MCF 10A (cell line): ENCODE measurements at regions of chr15 and their contacts with region 1.

Region 1: DNA sequence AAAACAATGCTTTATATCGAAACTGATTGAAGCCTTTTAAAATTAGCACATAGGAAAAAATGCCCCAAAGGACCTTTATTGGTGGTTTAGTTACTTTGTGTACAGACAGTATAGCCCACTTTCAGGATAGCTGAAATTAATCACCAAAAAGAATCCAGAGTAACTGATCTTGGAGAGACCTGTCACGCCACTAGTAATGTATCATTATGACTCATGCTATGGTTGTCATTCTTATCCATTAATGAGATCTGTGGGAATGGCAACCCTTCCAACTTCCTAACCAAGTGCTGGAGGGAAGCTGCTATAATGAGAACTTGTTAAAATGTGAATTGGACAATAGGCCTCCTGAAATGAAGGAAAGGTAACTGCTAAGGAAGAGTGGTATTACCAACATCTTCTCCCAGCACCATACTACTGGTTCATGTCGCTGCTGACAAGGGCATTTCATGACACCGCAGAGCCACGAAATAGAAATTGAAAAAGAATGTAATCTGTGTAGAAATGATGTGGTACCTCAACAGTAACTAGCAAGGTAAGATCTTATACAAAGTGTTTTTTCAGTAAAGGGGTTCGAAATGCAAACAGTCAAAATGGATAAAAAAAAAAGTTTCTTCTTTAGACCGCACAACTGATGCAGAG is 7.1 kb upstream of the EMC4 start:
- DNase-seq: peak; percentile 44
- H3K4me3 Mint-ChIP-seq: no peak overlapping the region
- H3K27ac Mint-ChIP-seq: no peak overlapping the region
- H3K4me1 Mint-ChIP-seq: peaks cover 7% of the 10 kb centered on the region
- H3K27me3 Mint-ChIP-seq: no peaks in the 10 kb centered on the region
- CTCF ChIP-seq: no peak

Region 2: DNA sequence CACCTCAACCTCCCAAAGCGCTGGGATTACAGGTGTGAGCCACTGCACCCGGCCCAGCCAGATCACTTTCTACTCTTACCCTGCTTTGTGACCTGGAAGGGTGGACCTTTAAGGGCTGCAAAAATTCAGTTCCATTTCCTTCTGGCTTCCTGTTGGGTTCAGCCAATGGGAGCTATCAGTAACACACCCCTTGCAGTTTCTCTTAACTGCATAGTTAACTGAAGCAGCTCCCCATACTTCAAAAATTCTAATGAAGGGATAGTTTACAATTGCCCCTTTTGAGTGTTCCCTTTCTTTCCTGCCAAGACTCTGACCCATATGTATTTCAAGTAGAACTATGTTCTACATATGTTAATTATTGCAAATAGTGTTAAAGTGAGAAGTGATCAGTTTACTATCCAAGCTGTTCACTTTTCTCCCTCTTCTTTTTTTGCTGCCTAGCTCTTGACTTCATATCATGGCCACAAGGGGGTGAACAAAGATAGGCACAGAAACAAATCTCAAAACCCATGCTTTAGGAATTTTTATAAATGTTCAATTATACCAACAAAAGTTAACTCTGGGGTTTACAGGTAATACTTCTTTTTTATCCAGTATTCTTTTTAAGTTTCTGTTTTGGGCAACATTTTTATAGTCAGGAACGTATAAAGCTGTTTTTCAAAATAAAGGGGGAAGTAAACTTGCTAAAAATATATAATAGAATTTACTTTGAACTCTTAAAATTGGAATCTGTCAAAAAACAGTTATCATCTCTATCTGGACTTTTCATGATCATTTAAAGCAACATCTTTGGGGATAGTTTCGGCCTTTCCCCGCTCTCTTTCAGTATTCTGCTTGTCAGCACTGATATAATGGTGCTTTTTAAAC is 107.7 kb before region 1 on chr15:
- CTCF ChIA-PET with region 1: interaction called, 10 read pairs
- POLR2A ChIA-PET with region 1: no interaction called
- intact Hi-C with region 1: no loop called
- DNase-seq: peak; percentile 59
- H3K4me3 Mint-ChIP-seq: no peak overlapping the region
- H3K27ac Mint-ChIP-seq: no peak overlapping the region
- H3K4me1 Mint-ChIP-seq: no peaks in the 10 kb centered on the region
- H3K27me3 Mint-ChIP-seq: no peaks in the 10 kb centered on the region
- CTCF ChIP-seq: peak; percentile 64

Region 3: DNA sequence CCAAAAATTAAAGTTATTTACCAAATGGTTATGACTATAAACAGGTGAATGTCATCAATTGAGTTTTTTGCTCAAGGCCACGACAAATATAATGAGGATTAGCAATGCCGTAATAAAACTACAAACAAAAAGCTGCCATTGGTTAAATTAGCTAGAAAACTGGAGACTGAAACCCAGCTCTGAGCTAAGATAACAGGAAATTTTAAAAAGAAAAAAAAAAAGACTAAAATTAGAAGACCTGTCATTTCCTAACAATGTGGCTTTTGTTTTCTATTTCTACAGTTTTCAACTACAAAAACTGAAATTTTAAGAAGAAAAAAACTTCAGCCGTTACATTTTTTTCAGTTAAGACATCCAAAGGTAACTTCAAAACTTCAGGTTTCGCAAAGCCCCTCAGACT is 110.2 kb after region 1 on chr15:
- CTCF ChIA-PET with region 1: no interaction called
- POLR2A ChIA-PET with region 1: no interaction called
- intact Hi-C with region 1: no loop called
- DNase-seq: no peak
- H3K4me3 Mint-ChIP-seq: no peak overlapping the region
- H3K27ac Mint-ChIP-seq: no peak overlapping the region
- H3K4me1 Mint-ChIP-seq: no peaks in the 10 kb centered on the region
- H3K27me3 Mint-ChIP-seq: no peaks in the 10 kb centered on the region
- CTCF ChIP-seq: no peak

Region 4: DNA sequence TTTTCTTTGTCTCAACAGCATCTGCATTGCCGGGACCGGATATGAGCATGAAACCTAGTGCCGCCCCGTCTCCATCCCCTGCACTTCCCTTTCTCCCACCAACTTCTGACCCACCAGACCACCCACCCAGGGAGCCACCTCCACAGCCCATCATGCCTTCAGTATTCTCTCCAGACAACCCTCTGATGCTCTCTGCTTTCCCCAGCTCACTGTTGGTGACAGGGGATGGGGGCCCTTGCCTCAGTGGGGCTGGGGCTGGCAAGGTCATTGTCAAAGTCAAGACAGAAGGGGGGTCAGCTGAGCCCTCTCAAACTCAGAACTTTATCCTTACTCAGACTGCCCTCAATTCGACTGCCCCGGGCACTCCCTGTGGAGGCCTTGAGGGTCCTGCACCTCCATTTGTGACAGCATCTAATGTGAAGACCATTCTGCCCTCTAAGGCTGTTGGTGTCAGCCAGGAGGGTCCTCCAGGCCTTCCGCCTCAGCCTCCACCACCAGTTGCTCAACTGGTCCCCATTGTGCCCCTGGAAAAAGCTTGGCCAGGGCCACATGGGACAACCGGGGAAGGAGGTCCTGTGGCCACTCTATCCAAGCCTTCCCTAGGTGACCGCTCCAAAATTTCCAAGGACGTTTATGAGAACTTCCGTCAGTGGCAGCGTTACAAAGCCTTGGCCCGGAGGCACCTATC is 130.4 kb after region 1 on chr15:
- CTCF ChIA-PET with region 1: no interaction called
- POLR2A ChIA-PET with region 1: no interaction called
- intact Hi-C with region 1: no loop called
- DNase-seq: no peak
- H3K4me3 Mint-ChIP-seq: no peak overlapping the region
- H3K27ac Mint-ChIP-seq: no peak overlapping the region
- H3K4me1 Mint-ChIP-seq: no peaks in the 10 kb centered on the region
- H3K27me3 Mint-ChIP-seq: peaks cover 22% of the 10 kb centered on the region
- CTCF ChIP-seq: no peak